Activated naive CD4-positive, alpha-beta T cell treated with anti-CD3 and anti-CD28 coated beads for 36 hours (primary cell): ENCODE measurements at regions of chr2 and their contacts with region 1.

Region 1: DNA sequence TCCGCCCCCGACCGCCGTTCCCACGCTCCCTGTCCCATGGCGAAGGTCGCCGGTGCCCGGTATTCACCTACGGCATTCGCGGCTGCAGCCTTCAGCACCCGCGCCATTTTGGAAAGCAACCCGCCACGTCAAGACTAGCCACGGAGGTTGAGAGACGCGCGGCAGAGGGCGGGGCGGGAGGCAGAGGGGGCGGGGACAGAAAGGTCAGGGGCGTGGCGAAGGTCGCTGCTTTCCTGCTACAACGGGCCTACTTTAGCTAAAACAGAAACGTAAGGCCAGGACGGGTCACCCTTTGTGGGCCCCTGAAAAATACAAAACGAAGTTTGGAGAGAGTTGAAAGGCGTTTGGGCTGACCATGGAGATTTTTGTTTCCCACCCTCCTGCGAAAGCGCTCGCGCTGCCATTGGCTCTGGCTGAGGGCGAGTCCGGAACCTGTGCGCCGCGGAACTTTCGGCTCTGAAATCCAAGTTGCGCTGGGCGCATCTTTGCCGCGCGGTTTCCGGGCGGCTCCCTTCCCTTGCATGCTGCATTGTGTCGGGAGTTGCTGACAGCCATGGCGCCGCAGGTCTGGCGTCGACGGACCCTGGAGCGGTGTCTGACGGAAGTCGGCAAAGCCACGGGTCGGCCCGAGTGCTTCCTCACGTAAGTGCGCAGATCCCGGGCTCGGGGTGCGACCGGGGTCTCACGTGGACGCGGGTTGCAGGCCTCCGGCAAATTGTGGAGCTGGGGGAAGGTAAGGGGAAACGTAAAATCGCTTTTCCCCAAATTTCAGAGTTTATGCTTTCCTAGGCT is at the starts of genes MCEE and MPHOSPH10:
- DNase-seq: peak; percentile 94
- H3K4me3 Mint-ChIP-seq: no peak within 1 kb of the TSS
- H3K27ac Mint-ChIP-seq: no peak within 1 kb of the TSS
- H3K4me1 Mint-ChIP-seq: peaks cover 16% of the 10 kb centered on the region
- H3K27me3 Mint-ChIP-seq: no peaks in the 10 kb centered on the region
- total RNA-seq, gene MCEE: 14.0 to 15.8 TPM
- total RNA-seq, gene MPHOSPH10: 27.0 to 32.3 TPM

Region 2: GRCh38 chr2:71100195-71100964 is 29.9 kb before region 1 on chr2:
- CTCF ChIA-PET with region 1: interaction called, 9 read pairs
- intact Hi-C with region 1: loop called (anchors 1 kb)
- DNase-seq: peak; percentile 75
- H3K4me3 Mint-ChIP-seq: no peak overlapping the region
- H3K27ac Mint-ChIP-seq: no peak overlapping the region
- H3K4me1 Mint-ChIP-seq: peaks cover 3% of the 10 kb centered on the region
- H3K27me3 Mint-ChIP-seq: peaks cover 3% of the 10 kb centered on the region

Region 3: DNA sequence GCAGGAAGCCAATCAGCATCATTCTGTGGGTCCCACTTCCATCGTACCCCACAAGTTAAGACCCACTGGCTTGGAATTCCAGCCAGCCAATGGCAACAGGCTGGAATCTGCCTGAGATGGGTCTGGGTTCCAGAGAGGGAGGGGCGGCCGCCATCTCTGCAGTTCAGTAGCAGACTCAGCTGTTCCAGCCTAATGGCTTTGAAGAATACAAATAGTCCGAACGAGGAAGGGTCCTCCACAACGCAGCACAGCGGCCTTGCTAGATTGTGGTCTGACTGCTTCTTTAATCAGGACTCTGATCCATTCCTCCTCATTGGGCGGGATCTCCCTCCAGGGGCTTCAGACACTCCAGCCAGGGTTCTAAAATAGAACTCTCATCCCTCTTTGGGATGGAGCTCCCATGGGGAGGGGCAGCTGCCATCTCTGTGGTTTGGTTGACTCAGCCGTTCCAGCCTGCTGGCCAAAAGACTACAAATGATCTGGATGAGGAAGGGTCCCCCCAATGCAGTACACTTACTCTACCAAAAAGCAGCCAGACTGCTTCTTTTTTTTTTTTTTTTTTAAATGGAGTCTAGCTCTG is 139.3 kb after region 1 on chr2:
- CTCF ChIA-PET with region 1: no interaction called
- intact Hi-C with region 1: no loop called
- DNase-seq: no peak
- H3K4me3 Mint-ChIP-seq: no peak overlapping the region
- H3K27ac Mint-ChIP-seq: no peak overlapping the region
- H3K4me1 Mint-ChIP-seq: no peaks in the 10 kb centered on the region
- H3K27me3 Mint-ChIP-seq: peaks cover 37% of the 10 kb centered on the region

Region 4: GRCh38 chr2:71410696-71411095 is 280.4 kb after region 1 on chr2:
- CTCF ChIA-PET with region 1: no interaction called
- intact Hi-C with region 1: no loop called
- DNase-seq: no peak
- H3K4me3 Mint-ChIP-seq: no peak overlapping the region
- H3K27ac Mint-ChIP-seq: no peak overlapping the region
- H3K4me1 Mint-ChIP-seq: peaks cover 4% of the 10 kb centered on the region
- H3K27me3 Mint-ChIP-seq: no peaks in the 10 kb centered on the region